ENCODE measurements at regions of chr19 and their contacts with region 1.

Region 1: DNA sequence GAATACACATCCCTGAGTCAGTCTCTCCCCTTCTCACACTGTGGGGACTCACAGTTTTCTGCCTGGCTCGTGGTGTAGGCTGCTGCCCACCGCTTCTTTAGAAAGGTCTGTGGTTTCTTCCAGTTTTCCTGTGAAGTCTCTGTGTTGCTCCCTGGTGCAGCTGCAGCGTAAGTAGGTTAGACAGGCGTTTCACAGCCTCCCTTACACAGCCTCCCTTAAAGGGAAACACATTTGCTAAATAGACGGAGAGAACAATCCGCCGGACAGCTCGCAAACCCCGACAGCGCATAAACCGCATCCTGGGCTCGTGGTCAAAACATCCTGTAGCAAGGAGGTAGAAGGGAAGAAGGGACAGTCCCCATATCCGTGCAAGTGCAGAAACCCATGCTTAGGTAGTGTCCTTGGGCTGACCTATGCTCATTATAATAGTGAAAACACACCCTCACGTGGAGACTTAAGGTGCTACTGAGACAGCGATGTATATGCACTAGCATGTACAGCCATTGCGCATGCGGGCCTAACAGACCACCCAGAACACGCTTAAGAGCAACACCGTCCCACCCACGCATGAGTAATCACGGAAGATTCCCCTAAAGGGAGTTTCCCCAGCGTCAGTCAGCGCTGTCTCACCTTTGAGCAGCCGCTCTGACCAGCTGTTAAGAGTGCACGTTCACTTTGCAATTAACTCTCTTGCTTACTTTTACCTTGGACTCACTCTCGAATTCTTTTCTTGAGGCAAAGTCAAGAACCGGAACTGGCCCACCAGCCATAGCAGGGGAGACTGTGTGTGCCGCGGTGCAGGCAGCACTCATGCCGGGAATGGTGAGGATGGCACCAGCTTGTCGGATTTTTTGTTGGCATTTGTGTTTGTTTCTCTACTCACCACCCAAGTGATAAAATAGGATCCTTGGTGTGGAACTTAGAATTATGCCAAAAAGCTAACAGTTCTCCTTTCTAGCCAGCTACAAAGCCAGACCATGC is 16.6 kb downstream of the SIGLEC8 start:
- DNase-seq: peak; percentile 85
- H3K4me3 Mint-ChIP-seq: peak overlapping the region; percentile 61
- H3K27ac Mint-ChIP-seq: peak overlapping the region; percentile 95
- H3K4me1 Mint-ChIP-seq: peaks cover 76% of the 10 kb centered on the region
- H3K27me3 Mint-ChIP-seq: peaks cover 19% of the 10 kb centered on the region

Region 2: GRCh38 chr19:51016798-51017683 is 424.7 kb before region 1 on chr19:
- intact Hi-C with region 1: no loop called
- DNase-seq: no peak
- H3K4me3 Mint-ChIP-seq: no peak overlapping the region
- H3K27ac Mint-ChIP-seq: no peak overlapping the region
- H3K4me1 Mint-ChIP-seq: peaks cover 12% of the 10 kb centered on the region
- H3K27me3 Mint-ChIP-seq: peaks cover 57% of the 10 kb centered on the region

Region 3: GRCh38 chr19:51114087-51114729 is 327.5 kb before region 1 on chr19:
- intact Hi-C with region 1: loop called (anchors 1 kb)
- DNase-seq: peak; percentile 23
- H3K4me3 Mint-ChIP-seq: peak overlapping the region; percentile 4
- H3K27ac Mint-ChIP-seq: peak overlapping the region; percentile 77
- H3K4me1 Mint-ChIP-seq: peaks cover 12% of the 10 kb centered on the region
- H3K27me3 Mint-ChIP-seq: peaks cover 6% of the 10 kb centered on the region

Region 4: GRCh38 chr19:51338563-51339312 is 103.0 kb before region 1 on chr19:
- intact Hi-C with region 1: loop called (anchors 1 kb)
- DNase-seq: peak; percentile 80
- H3K4me3 Mint-ChIP-seq: peak overlapping the region; percentile 93
- H3K27ac Mint-ChIP-seq: peak overlapping the region; percentile 90
- H3K4me1 Mint-ChIP-seq: peaks cover 22% of the 10 kb centered on the region
- H3K27me3 Mint-ChIP-seq: peaks cover 6% of the 10 kb centered on the region

Region 5: DNA sequence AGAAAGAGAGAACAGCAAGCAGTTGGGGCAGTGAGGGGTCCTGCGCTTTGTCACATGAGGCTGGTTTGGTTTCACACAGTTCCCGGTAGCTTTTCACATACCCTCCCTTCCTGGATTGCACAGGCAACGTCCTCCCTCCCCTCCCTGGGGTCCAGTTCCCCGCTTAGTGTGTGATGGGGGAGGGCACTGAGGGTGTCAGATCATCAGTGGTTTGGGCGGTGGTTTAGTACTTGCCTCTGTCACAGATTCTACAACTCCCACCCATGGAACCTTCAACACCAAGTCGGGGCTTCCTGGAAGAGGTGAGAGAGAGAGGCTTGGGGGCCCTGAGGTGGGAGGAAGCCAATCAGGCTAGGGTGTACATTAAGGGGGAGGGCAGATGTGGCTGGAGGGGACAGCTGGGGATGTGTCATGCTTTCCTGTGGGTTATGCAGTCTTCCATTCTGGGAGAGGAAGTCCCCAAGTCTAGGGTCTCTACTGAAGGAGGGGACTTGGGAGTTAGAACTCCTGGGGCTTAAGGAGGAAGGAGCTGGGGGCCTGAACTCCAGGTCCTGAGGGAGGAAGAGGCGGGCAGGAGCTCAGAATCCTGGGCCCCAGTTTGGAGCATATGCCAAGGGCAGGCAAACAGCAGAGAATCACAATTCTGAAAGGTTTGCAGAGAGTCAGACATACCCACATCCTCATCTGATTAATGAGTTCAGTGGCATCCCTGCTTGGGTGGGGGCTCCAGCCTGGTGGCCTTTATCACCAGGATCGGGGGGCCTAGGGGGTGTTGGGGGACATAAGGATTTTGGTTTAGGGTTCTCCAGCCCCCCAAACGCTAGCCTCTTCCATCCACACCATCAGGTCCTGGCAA is 68.8 kb before region 1 on chr19 and contains the start of gene NKG7:
- intact Hi-C with region 1: loop called (anchors 1 kb)
- DNase-seq: peak; percentile 68
- H3K4me3 Mint-ChIP-seq: peak within 1 kb of the TSS; percentile 87
- H3K27ac Mint-ChIP-seq: peak within 1 kb of the TSS; percentile 87
- H3K4me1 Mint-ChIP-seq: peaks cover 74% of the 10 kb centered on the region
- H3K27me3 Mint-ChIP-seq: no peaks in the 10 kb centered on the region
- total RNA-seq, gene NKG7: 376 and 393 TPM in 2 replicates

Region 6: GRCh38 chr19:51422053-51422448 is 19.6 kb before region 1 on chr19:
- intact Hi-C with region 1: loop called (anchors 1 kb)
- DNase-seq: peak; percentile 78
- H3K4me3 Mint-ChIP-seq: no peak overlapping the region
- H3K27ac Mint-ChIP-seq: no peak overlapping the region
- H3K4me1 Mint-ChIP-seq: peaks cover 10% of the 10 kb centered on the region
- H3K27me3 Mint-ChIP-seq: peaks cover 26% of the 10 kb centered on the region

Region 7: GRCh38 chr19:51479531-51480331 is 38.0 kb after region 1 on chr19:
- intact Hi-C with region 1: loop called (anchors 1 kb)
- DNase-seq: no peak
- H3K4me3 Mint-ChIP-seq: no peak overlapping the region
- H3K27ac Mint-ChIP-seq: peak overlapping the region; percentile 76
- H3K4me1 Mint-ChIP-seq: peaks cover 25% of the 10 kb centered on the region
- H3K27me3 Mint-ChIP-seq: peaks cover 13% of the 10 kb centered on the region

Region 8: GRCh38 chr19:51552996-51553725 is 111.5 kb after region 1 on chr19:
- intact Hi-C with region 1: no loop called
- DNase-seq: no peak
- H3K4me3 Mint-ChIP-seq: no peak overlapping the region
- H3K27ac Mint-ChIP-seq: no peak overlapping the region
- H3K4me1 Mint-ChIP-seq: peaks cover 10% of the 10 kb centered on the region
- H3K27me3 Mint-ChIP-seq: peaks cover 5% of the 10 kb centered on the region

Region 9: DNA sequence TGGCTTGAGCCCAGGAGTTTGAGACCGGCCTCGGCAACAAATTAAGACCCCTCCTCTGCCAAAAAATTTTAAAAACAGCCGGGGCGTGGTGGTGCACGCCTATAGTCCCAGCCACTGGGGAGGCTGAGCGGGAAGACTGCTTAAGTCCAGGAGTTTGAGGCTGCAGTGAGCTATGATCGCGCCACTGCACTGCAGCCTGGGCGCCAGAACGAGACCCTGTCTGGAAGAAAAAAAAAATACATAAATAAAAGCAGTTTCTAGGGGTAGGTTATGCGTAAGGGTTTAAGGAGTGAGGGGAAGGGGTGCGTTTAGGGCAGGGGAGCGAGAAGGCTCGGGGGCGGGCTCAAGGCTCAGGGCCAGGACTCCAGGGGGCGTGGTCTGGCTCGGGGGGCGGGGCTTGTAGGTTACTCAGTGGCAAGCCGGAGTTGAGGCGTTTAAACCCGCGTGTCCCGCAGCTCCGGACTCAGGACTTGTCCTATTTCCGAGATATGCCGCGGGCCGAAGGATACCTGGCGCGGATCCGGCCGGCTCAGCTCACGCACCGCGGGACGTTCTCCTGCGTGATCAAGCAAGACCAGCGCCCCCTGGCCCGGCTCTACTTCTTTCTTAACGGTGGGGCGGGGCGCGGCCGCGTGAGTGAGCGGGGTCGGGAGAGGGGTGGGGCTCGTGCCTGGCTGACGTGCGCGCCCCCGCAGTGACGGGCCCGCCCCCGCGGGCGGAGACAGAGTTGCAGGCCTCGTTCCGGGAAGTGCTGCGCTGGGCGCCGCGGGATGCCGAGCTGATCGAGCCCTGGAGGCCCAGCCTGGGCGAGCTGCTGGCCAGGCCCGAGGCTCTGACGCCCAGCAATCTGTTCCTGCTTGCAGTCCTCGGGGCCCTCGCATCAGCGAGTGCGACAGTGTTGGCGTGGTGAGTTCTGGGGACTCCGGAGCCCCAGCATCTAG is 262.1 kb after region 1 on chr19:
- intact Hi-C with region 1: loop called (anchors 2 kb)
- DNase-seq: peak; percentile 95
- H3K4me3 Mint-ChIP-seq: peak overlapping the region; percentile 87
- H3K27ac Mint-ChIP-seq: peak overlapping the region; percentile 89
- H3K4me1 Mint-ChIP-seq: peaks cover 30% of the 10 kb centered on the region
- H3K27me3 Mint-ChIP-seq: peaks cover 3% of the 10 kb centered on the region